Activated CD4-positive, alpha-beta memory T cell treated with anti-CD3 and anti-CD28 coated beads for 36 hours (primary cell): ENCODE measurements at regions of chr5 and their contacts with region 1.

Region 1: DNA sequence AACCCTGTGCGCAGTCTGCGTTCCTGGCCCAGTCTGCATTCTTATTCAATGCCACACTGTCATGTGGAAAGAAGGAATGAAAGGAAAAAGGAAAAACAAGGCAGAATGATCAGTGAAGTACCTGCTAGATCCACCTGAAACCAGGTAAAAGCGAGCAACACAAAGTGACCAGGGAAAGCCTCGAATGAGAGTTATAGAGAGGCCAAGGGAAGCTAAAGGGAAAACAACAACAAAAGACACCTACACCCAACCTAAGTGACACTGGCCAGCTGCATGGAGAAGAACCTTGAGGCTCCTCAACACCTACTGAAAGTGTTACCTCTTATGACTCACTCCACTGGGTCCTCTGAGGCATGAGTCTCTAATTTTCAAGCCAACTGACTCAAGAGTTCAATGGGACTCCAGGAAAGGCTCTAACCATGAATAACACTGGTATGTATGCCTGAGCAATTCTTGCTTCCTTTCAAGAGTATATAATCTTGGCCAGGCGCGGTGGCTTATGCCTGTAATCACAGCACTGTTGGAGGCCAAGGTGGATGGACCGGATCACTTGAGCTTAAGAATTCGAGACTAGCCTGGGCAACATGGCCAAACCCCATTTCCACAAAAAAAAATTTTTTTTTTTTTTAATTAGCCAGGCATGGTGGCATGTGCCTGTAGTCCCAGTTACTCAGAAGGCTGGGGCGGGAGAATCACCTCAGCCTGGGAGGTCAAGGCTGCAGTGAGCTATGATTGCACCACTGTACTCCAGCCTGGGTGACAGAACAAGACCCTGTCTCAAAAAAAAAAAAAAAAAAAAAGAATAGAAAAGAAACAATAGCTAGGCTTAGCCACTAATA is 29.0 kb downstream of the MTMR12 start:
- DNase-seq: peak; percentile 42
- H3K4me3 Mint-ChIP-seq: no peak overlapping the region
- H3K27ac Mint-ChIP-seq: peak overlapping the region; percentile 38
- H3K4me1 Mint-ChIP-seq: peaks cover 43% of the 10 kb centered on the region
- H3K27me3 Mint-ChIP-seq: no peaks in the 10 kb centered on the region

Region 2: DNA sequence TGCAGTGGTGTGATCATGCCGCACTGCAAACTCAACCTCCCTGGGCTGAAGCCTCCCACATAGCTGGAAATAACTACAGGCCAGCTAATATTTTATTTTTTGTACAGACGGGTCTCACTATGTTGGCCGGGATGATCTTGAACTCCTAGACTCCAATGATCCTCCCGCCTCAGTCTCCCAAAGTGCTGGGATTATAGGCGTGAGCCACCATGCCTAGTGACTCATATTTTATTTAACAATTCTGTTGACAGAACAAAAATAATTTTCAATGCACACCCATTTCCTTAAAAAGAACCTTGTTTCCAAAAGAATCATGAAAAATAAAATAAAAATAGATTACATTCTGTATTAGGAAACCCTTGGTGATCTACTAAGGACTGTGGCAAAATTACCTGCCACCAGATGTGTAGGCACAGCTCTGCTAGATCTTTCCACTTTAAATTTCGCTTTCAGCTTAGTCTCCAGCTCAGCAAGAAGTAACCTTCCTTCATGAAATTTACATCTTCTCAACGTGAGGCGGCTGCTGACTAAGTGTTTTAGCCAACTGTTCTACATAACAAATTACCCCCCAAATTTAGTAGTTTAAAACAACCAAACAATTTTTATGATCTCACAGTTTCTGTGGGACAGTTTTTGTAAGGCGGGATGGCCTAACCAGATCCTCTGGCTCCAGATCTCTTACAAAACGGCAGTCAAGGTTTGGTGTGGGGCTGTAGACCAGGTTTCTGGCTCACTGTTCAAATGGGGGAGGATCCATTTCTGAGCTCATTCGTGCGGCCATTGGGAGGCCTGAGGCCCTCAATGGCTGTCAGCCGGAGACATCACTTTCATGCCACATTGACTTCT is 77.0 kb before region 1 on chr5:
- CTCF ChIA-PET with region 1: no interaction called
- POLR2A ChIA-PET with region 1: no interaction called
- intact Hi-C with region 1: loop called (anchors 1 kb)
- DNase-seq: peak; percentile 14
- H3K4me3 Mint-ChIP-seq: no peak overlapping the region
- H3K27ac Mint-ChIP-seq: peak overlapping the region; percentile 57
- H3K4me1 Mint-ChIP-seq: peaks cover 36% of the 10 kb centered on the region
- H3K27me3 Mint-ChIP-seq: peaks cover 3% of the 10 kb centered on the region

Region 3: GRCh38 chr5:32261198-32261597 is 22.6 kb before region 1 on chr5:
- CTCF ChIA-PET with region 1: no interaction called
- POLR2A ChIA-PET with region 1: no interaction called
- intact Hi-C with region 1: loop called (anchors 1 kb)
- DNase-seq: peak; percentile 55
- H3K4me3 Mint-ChIP-seq: no peak overlapping the region
- H3K27ac Mint-ChIP-seq: peak overlapping the region; percentile 28
- H3K4me1 Mint-ChIP-seq: peaks cover 10% of the 10 kb centered on the region
- H3K27me3 Mint-ChIP-seq: no peaks in the 10 kb centered on the region

Region 4: GRCh38 chr5:32272746-32273145 is 11.0 kb before region 1 on chr5:
- CTCF ChIA-PET with region 1: no interaction called
- POLR2A ChIA-PET with region 1: no interaction called
- intact Hi-C with region 1: no loop called
- DNase-seq: no peak
- H3K4me3 Mint-ChIP-seq: no peak overlapping the region
- H3K27ac Mint-ChIP-seq: no peak overlapping the region
- H3K4me1 Mint-ChIP-seq: peaks cover 14% of the 10 kb centered on the region
- H3K27me3 Mint-ChIP-seq: no peaks in the 10 kb centered on the region

Region 5: DNA sequence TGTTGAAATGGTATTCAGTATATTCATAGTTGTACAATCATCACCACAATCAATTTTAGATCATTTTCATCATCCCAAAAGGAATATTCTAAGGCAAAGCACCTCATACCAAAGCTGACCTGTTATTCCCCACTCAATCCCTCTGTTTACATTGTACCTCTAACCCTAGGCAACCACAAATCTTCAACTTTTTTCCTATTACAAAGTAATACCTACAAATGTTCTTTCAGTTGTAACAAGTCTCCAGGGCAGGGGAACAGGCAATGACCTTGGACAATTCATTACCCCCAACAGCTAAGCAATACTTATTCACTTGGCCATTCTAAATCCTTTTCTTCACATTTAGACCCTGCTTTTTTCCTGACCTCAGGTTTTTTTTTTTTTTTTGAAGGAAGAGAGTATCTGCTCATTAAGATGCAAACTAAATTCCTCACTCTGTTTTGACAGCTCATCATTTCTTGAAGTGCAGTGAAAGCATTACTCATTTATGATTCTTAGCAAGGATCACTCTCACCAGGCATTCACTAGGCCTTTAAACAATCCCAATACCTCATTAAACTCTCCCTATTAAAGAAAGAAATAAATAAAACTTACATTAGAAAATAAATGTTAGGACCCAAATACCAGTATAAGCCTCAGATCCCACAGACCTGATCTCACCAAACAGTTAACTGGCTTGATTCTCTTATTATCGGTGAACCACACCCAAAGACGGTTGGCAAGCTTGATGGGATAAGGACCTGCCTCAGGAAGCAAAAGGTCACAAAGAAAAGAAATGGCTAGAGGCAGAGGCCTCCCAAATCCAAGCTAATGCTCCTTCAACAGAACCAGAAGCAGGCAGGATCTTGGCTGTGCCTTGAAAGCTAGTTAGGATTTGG is 13.7 kb after region 1 on chr5:
- CTCF ChIA-PET with region 1: no interaction called
- POLR2A ChIA-PET with region 1: interaction called, 6 read pairs
- intact Hi-C with region 1: loop called (anchors 1 kb)
- DNase-seq: no peak
- H3K4me3 Mint-ChIP-seq: no peak overlapping the region
- H3K27ac Mint-ChIP-seq: no peak overlapping the region
- H3K4me1 Mint-ChIP-seq: peaks cover 27% of the 10 kb centered on the region
- H3K27me3 Mint-ChIP-seq: no peaks in the 10 kb centered on the region

Region 6: DNA sequence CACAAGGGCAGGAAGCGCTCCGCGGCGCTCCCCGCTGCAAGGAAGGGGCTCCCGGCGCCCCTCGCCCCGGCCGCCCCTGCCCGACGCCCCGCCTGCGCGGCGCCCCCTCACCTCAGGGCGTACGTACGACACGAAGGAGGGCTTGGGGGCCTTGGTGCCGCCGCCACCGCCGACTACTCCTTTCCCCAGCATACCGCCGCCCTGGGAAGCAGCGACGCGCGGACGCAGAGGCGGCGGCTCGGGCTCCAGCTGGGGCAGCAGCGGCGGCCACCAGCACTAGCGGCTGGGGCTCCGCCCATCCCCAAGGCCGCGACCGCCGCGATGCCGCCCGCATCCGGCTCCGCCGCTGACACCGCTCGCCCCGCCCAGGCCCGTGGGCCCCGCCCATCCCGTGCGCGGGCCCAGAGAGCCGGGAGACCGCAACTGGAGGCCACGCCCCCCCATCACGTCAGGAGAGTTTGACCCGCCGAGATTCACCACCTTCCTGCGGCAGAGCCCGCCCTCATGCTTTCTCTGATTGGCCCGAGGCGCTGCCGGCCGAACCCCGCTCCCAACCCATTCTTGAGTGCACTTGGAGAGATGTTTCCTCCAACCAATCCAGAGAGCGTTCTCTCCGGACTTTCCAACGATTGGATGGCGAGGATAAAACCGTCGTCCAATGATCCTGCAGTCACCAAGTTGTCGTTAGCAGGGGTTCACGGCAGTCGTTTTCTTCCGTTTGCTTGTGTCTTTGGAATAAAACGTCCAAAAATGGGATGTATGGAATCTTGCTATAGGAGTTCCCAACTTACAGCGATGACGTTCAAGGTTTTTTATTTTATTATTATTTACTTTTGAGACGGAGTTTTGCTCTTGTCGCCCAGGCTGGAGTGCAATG is 29.1 kb after region 1 on chr5 and contains the start of gene MTMR12:
- CTCF ChIA-PET with region 1: interaction called, 3 read pairs
- POLR2A ChIA-PET with region 1: no interaction called
- intact Hi-C with region 1: loop called (anchors 1 kb)
- DNase-seq: peak; percentile 100
- H3K4me3 Mint-ChIP-seq: peak within 1 kb of the TSS; percentile 86
- H3K27ac Mint-ChIP-seq: peak within 1 kb of the TSS; percentile 85
- H3K4me1 Mint-ChIP-seq: peaks cover 22% of the 10 kb centered on the region
- H3K27me3 Mint-ChIP-seq: no peaks in the 10 kb centered on the region
- total RNA-seq, gene MTMR12: 22.3 to 22.4 TPM

Region 7: GRCh38 chr5:32462618-32463017 is 178.9 kb after region 1 on chr5:
- CTCF ChIA-PET with region 1: no interaction called
- POLR2A ChIA-PET with region 1: no interaction called
- intact Hi-C with region 1: loop called (anchors 1 kb)
- DNase-seq: peak; percentile 80
- H3K4me3 Mint-ChIP-seq: no peak overlapping the region
- H3K27ac Mint-ChIP-seq: peak overlapping the region; percentile 73
- H3K4me1 Mint-ChIP-seq: peaks cover 17% of the 10 kb centered on the region
- H3K27me3 Mint-ChIP-seq: no peaks in the 10 kb centered on the region

Region 8: GRCh38 chr5:32542216-32543059 is 258.7 kb after region 1 on chr5:
- CTCF ChIA-PET with region 1: no interaction called
- POLR2A ChIA-PET with region 1: no interaction called
- intact Hi-C with region 1: loop called (anchors 5 kb)
- DNase-seq: peak; percentile 65
- H3K4me3 Mint-ChIP-seq: peak overlapping the region; percentile 36
- H3K27ac Mint-ChIP-seq: peak overlapping the region; percentile 94
- H3K4me1 Mint-ChIP-seq: peaks cover 57% of the 10 kb centered on the region
- H3K27me3 Mint-ChIP-seq: no peaks in the 10 kb centered on the region